ENCODE measurements at regions of chr5 and their contacts with region 1.

Region 1: DNA sequence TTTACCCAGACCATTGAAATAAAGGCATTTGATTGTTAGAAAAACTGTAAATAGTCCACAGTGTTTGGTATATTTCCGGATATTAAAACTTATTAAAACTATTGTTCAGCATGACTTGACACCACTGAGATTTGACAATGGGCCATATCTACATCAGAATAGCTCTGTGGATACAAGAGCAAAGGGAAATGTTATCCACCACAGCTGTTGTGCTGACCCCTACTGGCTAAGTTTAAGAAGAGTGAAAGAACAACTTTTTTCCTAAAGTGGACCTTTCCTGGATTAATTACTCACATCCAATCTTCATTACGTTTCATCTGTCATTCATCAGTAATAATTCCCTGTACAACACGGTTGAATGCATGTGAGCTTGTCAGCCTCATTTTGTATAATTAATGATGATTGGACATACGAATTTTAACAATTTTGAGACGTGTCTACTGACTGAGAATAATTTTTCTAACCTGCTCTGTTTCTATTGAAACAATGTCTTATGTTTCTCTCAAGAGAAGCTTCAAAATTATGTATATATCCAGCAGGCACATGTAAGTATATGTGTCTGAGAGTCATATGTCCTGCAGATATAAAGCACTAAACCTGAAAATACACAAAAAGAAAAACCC is 1952.6 kb downstream of the MAT2B start:
- DNase-seq: peak; percentile 45
- H3K4me3 ChIP-seq: no peak overlapping the region
- H3K27ac ChIP-seq: no peak overlapping the region
- H3K4me1 ChIP-seq: no peaks in the 10 kb centered on the region
- H3K27me3 ChIP-seq: no peaks in the 10 kb centered on the region
- CTCF ChIP-seq: peak; percentile 27 to 47
- POLR2A ChIP-seq: no peak

Region 2: DNA sequence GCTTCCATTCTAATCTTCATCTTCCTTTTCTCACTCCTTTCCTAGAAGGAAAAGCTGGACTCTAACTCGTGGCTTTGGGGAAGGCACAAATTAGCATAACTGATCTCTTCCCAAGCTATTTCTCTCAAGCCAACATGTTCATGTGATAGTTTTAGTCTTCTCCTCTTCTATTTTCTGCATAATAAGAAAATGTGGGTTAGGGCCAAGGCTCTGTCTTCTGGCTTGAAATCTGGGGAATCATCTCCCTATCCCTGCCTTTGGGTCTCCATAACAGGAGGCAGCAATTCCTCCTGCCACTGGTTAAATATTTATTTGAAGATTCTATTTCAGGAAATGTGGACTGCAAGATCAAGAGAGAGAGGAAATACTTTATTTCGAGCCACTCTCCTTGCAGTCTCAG is 282.9 kb before region 1 on chr5:
- CTCF ChIA-PET with region 1: no interaction called
- POLR2A ChIA-PET with region 1: no interaction called
- dilution Hi-C with region 1: no loop called
- intact Hi-C with region 1: no loop called
- DNase-seq: no peak
- H3K4me3 ChIP-seq: no peak overlapping the region
- H3K27ac ChIP-seq: no peak overlapping the region
- H3K4me1 ChIP-seq: no peaks in the 10 kb centered on the region
- H3K27me3 ChIP-seq: no peaks in the 10 kb centered on the region
- CTCF ChIP-seq: no peak
- POLR2A ChIP-seq: no peak

Region 3: GRCh38 chr5:165370772-165371171 is 87.2 kb before region 1 on chr5:
- CTCF ChIA-PET with region 1: no interaction called
- POLR2A ChIA-PET with region 1: no interaction called
- dilution Hi-C with region 1: no loop called
- intact Hi-C with region 1: no loop called
- DNase-seq: peak; percentile 7
- H3K4me3 ChIP-seq: no peak overlapping the region
- H3K27ac ChIP-seq: no peak overlapping the region
- H3K4me1 ChIP-seq: peaks cover 5% of the 10 kb centered on the region
- H3K27me3 ChIP-seq: no peaks in the 10 kb centered on the region
- CTCF ChIP-seq: no peak
- POLR2A ChIP-seq: no peak

Region 4: GRCh38 chr5:165477546-165477945 is 19.6 kb after region 1 on chr5:
- CTCF ChIA-PET with region 1: interaction called, 3 read pairs
- POLR2A ChIA-PET with region 1: no interaction called
- dilution Hi-C with region 1: no loop called
- intact Hi-C with region 1: loop called (anchors 1 kb)
- DNase-seq: no peak
- H3K4me3 ChIP-seq: no peak overlapping the region
- H3K27ac ChIP-seq: no peak overlapping the region
- H3K4me1 ChIP-seq: no peaks in the 10 kb centered on the region
- H3K27me3 ChIP-seq: no peaks in the 10 kb centered on the region
- CTCF ChIP-seq: no peak
- POLR2A ChIP-seq: no peak

Region 5: DNA sequence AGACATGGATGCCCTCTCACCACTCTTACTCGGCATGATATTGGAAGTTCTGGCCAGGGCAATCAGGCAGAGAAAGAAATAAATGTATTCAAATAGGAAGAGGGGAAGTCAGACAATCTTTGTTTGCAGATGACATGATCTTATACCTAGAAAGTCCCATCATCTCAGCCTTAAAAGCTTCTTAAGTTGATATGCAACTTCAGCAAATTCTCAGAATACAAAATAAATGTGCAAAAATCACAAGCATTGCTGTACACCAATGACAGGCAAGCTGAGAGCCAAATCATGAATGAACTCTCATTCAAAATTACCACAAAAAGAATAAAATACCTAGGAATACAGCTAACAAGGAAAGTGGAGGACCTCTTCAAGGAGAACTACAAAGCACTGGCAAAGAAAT is 237.8 kb after region 1 on chr5:
- CTCF ChIA-PET with region 1: no interaction called
- POLR2A ChIA-PET with region 1: no interaction called
- dilution Hi-C with region 1: no loop called
- intact Hi-C with region 1: no loop called
- DNase-seq: no peak
- H3K4me3 ChIP-seq: no peak overlapping the region
- H3K27ac ChIP-seq: no peak overlapping the region
- H3K4me1 ChIP-seq: no peaks in the 10 kb centered on the region
- H3K27me3 ChIP-seq: no peaks in the 10 kb centered on the region
- CTCF ChIP-seq: no peak
- POLR2A ChIP-seq: no peak